Activated CD4-positive, alpha-beta memory T cell treated with anti-CD3 and anti-CD28 coated beads for 36 hours (primary cell): ENCODE measurements at regions of chr5 and their contacts with region 1.

Region 1: DNA sequence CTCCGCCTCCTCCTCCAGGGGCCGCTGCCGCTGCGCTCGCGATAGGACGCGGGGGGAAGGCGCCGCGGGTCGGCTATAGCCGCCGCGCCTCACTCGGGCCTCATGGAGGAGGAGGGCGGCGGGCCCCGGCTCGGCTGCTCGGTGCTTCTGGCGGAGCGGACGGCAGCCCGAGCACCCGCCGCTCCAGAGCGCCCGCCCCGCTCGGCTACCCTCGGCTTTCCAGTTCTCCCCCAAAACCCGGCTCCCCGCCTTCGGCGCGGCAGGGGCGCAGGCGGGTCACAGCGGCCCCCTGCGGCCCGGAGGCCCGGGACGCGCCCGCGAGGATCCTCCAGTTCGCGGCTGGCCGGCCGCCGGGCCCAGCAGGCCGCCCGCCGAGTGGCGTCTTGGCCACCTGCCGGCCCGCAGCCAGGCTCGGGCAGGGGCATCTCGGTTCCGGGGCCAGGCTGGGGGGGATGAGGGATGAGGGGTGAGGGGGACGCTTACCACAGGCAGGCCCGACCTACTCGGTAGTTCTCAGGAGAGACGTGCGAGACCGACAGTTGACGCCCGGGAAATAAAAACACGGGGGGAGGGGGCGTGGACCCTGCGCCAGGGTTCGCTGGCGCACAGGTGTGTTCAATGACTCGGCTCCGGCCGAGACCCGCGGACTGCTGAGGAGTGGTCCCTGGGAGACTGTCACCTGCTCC is at the start of gene PAIP1:
- DNase-seq: peak; percentile 89
- H3K4me3 Mint-ChIP-seq: peak within 1 kb of the TSS; percentile 90
- H3K27ac Mint-ChIP-seq: peak within 1 kb of the TSS; percentile 91
- H3K4me1 Mint-ChIP-seq: peaks cover 15% of the 10 kb centered on the region
- H3K27me3 Mint-ChIP-seq: no peaks in the 10 kb centered on the region
- total RNA-seq, gene PAIP1: 49.2 to 50.5 TPM

Region 2: GRCh38 chr5:43396762-43397304 is 160.2 kb before region 1 on chr5:
- CTCF ChIA-PET with region 1: no interaction called
- POLR2A ChIA-PET with region 1: no interaction called
- intact Hi-C with region 1: loop called (anchors 5 kb)
- DNase-seq: peak; percentile 75
- H3K4me3 Mint-ChIP-seq: peak overlapping the region; percentile 89
- H3K27ac Mint-ChIP-seq: peak overlapping the region; percentile 87
- H3K4me1 Mint-ChIP-seq: peaks cover 31% of the 10 kb centered on the region
- H3K27me3 Mint-ChIP-seq: no peaks in the 10 kb centered on the region

Region 3: DNA sequence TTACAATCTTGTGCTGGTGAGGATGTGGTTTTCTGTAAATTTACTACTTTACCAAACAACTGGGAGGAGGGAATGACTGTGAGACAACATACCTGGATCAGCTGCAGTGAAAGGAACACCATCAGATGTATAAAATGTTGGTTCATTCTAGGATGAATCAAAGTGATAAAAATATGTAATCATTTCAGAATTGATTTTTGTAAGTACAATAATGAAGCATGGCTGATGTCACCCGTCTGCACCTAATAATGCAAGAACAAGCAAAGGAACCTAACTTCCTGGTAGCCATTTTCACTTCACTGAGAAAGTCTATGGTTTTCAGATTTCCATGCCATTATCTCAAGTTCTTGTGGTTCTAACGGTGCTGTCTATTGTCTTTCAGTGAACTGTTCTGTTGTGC is 23.4 kb before region 1 on chr5:
- CTCF ChIA-PET with region 1: interaction called, 15 read pairs
- POLR2A ChIA-PET with region 1: no interaction called
- intact Hi-C with region 1: loop called (anchors 1 kb)
- DNase-seq: peak; percentile 29
- H3K4me3 Mint-ChIP-seq: no peak overlapping the region
- H3K27ac Mint-ChIP-seq: peak overlapping the region; percentile 79
- H3K4me1 Mint-ChIP-seq: peaks cover 12% of the 10 kb centered on the region
- H3K27me3 Mint-ChIP-seq: no peaks in the 10 kb centered on the region

Region 4: DNA sequence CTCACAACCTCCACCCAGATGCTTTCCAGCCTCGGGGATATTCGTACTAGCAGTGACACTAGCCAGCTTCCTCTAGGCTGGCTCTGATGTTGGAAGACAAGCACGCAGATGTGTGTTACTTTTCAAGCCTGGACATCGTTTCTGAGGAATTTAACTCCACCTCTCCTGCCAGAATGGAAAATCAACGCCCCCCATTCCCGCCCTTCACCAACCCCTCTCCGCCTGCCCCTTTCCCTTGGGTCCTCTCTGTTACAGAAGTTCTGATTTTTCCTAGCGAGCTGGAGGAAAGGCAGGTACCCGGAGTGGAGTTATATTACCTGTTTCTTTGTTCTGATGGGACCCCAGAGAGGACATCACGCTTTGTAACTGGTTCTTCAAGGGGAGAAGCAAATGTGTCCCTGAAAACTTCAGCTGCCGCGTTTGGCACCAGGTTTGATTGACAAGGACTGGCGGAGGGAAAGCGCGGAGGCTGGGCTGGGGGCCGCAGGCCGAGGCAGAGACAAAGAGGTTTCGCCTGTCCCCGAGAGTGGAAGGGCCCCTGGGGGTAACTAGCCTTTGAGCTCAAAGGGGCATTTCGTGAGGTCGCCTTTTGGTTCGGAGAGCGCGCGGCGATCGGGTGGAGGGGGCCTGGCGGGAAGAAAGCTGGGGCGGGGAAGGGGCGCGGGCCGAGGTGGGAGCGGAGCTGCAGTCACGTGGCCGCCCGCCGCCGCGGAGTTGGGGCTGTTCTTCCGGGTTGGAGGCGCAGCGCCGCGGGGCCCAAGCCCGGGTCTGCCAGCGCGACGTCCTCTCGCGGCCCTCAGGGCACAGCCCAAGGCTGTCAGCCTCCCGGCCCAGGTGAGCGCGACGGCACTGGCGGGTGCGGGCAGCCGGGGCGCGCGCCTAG is 45.7 kb after region 1 on chr5 and contains the start of gene NNT:
- CTCF ChIA-PET with region 1: interaction called, 8 read pairs
- POLR2A ChIA-PET with region 1: interaction called, 13 read pairs
- intact Hi-C with region 1: loop called (anchors 1 kb)
- DNase-seq: peak; percentile 84
- H3K4me3 Mint-ChIP-seq: peak within 1 kb of the TSS; percentile 97
- H3K27ac Mint-ChIP-seq: peak within 1 kb of the TSS; percentile 93
- H3K4me1 Mint-ChIP-seq: peaks cover 35% of the 10 kb centered on the region
- H3K27me3 Mint-ChIP-seq: no peaks in the 10 kb centered on the region
- total RNA-seq, gene NNT: 96.6 to 99.9 TPM